ENCODE measurements at regions of chr12 and their contacts with region 1.

Region 1: DNA sequence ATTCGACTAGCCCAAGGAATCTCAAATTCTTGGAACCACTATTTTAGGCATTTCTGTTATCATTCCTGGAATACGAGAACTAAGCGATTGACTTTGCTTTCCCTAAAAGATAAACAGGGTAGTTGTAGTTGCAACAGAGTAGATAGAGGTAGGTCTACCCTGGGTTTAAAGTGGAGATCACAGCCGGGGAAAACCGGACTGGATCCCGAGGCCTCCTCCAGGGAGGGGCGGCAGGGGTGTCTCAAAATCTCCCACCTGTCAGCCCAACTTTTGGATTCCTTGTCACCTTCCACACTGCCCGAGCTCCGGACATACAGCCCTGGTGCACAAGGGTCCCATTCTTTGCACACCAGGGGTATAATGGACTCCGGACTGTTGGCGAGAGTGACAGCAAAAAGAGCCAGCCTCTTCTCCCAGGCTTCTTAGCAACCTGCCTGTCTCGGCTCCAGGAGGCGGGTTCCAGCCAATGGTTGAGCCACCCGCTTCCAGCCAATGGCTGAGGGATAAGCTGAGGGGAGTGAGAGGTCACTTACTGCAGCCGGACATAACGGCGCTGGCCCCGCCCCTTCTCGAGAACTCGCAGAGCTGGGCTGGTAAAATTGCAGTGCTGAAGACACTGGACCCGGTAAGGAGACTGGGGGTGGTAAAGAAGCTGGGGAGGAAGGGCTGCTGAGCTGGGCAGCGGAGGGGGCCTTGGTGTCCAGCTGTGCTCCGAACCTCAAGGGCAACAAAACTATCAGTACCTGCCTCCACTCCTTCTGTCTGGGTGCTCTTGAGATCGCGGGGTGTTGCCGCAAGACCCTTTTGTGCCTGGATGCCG is at the start of gene SUOX:
- DNase-seq: peak; percentile 54
- H3K4me3 Mint-ChIP-seq: peak within 1 kb of the TSS; percentile 84
- H3K27ac Mint-ChIP-seq: peak within 1 kb of the TSS; percentile 46
- H3K4me1 Mint-ChIP-seq: peaks cover 24% of the 10 kb centered on the region
- H3K27me3 Mint-ChIP-seq: no peaks in the 10 kb centered on the region
- total RNA-seq, gene SUOX: 19.9 and 21.2 TPM in 2 replicates

Region 2: GRCh38 chr12:55780685-55781084 is 216.2 kb before region 1 on chr12:
- intact Hi-C with region 1: no loop called
- DNase-seq: no peak
- H3K4me3 Mint-ChIP-seq: no peak overlapping the region
- H3K27ac Mint-ChIP-seq: peak overlapping the region; percentile 51
- H3K4me1 Mint-ChIP-seq: peaks cover 20% of the 10 kb centered on the region
- H3K27me3 Mint-ChIP-seq: no peaks in the 10 kb centered on the region

Region 3: DNA sequence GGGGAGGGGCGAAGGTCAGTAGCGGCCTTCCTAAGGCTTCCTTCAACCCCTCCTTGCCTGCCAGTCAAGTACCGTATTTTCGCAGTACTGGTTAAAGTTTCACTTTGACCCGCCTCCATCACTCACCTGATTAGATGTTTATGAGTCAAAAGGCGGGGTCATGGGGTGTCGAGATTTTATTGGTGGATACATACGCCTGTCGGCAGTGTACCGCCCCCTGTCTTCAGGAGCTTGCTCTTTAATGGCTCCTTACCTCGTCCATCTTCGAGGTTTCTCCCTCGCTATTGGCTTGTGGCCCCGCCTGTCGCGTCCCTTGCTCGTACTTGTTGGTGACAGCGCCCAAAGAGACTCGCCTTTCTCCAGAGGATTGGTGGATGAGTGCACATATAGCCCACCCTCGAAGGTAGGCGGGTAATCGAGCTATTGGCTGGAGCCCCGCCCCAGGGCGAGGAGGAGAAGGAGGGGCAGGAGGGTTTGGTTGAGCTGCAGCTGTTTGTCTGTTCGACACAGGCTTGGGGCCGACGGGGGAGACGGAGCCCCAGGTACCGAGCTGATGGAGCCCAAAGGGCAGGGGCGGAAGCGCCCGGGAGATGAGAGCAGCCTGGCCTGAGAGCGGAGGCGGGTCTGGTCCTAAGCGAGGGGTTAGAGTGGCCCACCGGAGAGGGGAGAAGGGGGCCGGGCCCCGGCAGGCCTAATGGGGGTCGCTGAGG is 23.2 kb before region 1 on chr12 and contains the start of gene RAB5B:
- intact Hi-C with region 1: loop called (anchors 1 kb)
- DNase-seq: peak; percentile 99
- H3K4me3 Mint-ChIP-seq: no peak within 1 kb of the TSS
- H3K27ac Mint-ChIP-seq: no peak within 1 kb of the TSS
- H3K4me1 Mint-ChIP-seq: peaks cover 26% of the 10 kb centered on the region
- H3K27me3 Mint-ChIP-seq: no peaks in the 10 kb centered on the region
- total RNA-seq, gene RAB5B: 47.9 and 51.0 TPM in 2 replicates

Region 4: GRCh38 chr12:56020423-56021184 is 23.7 kb after region 1 on chr12 and contains the start of gene IKZF4:
- intact Hi-C with region 1: loop called (anchors 1 kb)
- DNase-seq: no peak
- H3K4me3 Mint-ChIP-seq: peak within 1 kb of the TSS; percentile 95
- H3K27ac Mint-ChIP-seq: peak within 1 kb of the TSS; percentile 95
- H3K4me1 Mint-ChIP-seq: peaks cover 34% of the 10 kb centered on the region
- H3K27me3 Mint-ChIP-seq: no peaks in the 10 kb centered on the region
- total RNA-seq, gene IKZF4: 34.8 and 35.5 TPM in 2 replicates

Region 5: DNA sequence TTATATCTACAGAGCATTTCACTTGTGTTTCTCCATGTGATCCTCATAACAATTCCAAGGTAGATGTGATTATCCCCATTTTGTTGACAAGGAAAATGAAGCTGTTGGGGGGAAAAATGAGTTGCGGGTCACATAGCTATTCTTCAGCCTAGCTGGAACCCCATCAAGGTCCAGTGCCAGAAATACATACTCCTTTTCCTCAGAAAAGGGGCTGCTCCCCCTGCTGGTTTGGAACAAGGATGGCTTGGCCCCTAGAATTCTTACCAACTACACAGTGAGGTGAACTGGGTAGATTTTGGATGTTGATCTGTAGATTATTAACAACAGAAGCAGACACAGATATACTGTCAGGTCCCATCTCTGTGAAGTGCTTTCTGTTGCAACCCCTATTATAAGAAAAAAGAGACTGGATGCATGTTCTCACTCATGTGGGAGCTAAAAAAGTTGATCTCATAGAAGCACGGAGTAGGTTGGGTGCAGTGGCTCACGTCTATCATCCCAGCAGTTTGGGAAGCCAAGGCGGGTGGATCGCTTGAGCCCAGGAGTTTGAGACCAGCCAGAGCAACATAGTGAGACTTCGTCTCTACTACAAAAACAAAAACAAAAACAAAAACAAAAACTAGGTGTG is 32.9 kb after region 1 on chr12:
- intact Hi-C with region 1: loop called (anchors 1 kb)
- DNase-seq: peak; percentile 27
- H3K4me3 Mint-ChIP-seq: no peak overlapping the region
- H3K27ac Mint-ChIP-seq: peak overlapping the region; percentile 29
- H3K4me1 Mint-ChIP-seq: peaks cover 41% of the 10 kb centered on the region
- H3K27me3 Mint-ChIP-seq: no peaks in the 10 kb centered on the region

Region 6: DNA sequence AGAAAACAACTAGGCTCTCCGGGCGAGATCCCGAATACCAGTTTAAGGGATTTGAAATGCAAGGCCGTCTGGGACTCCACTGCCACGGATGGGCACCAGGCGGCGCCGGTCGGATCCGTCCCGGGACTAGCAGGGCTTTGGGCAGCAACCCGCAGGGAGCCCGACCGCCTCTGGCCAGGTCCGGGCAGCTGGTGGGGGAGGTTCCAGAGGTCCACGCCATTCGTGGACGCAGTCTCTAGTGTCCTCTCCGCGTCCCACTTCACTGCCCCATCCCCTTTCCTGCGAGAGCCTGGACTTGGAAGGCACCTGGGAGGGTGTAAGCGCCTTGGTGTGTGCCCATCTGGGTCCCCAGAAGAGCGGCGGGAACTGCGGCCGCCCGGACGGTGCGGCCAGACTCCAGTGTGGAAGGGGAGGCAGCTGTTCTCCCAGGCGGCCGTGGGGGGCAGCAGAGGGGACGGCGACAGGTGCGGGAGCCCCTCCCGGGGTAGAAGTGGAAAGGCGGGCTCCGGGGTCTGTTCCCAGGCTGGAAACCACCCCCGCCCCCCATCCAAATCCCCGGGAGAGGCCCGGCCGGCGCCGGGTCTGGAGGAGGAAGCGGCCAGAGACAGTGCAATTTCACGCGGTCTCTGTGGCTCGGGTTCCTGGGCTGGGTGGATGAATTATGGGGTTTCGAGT is 82.2 kb after region 1 on chr12:
- intact Hi-C with region 1: no loop called
- DNase-seq: peak; percentile 37
- H3K4me3 Mint-ChIP-seq: peak overlapping the region; percentile 68
- H3K27ac Mint-ChIP-seq: no peak overlapping the region
- H3K4me1 Mint-ChIP-seq: peaks cover 2% of the 10 kb centered on the region
- H3K27me3 Mint-ChIP-seq: peaks cover 31% of the 10 kb centered on the region

Measured in activated T-helper 2 cell treated with anti-CD3 and anti-CD28 coated beads, Interferon-gamma antibody, Interleukin-2, Interleukin-4, amounts not matched to agents 10 μg/mL and 5 μg/mL and 100 μg/mL, durations not matched to agents 14 hours and 24 hours and 36 hours (primary cell).